Activated CD4-positive, alpha-beta memory T cell treated with anti-CD3 and anti-CD28 coated beads, Interleukin-2, amount 10 ng/mL, durations not matched to agents 7 days and 5 days (primary cell): ENCODE measurements at regions of chr4 and their contacts with region 1.

Region 1: DNA sequence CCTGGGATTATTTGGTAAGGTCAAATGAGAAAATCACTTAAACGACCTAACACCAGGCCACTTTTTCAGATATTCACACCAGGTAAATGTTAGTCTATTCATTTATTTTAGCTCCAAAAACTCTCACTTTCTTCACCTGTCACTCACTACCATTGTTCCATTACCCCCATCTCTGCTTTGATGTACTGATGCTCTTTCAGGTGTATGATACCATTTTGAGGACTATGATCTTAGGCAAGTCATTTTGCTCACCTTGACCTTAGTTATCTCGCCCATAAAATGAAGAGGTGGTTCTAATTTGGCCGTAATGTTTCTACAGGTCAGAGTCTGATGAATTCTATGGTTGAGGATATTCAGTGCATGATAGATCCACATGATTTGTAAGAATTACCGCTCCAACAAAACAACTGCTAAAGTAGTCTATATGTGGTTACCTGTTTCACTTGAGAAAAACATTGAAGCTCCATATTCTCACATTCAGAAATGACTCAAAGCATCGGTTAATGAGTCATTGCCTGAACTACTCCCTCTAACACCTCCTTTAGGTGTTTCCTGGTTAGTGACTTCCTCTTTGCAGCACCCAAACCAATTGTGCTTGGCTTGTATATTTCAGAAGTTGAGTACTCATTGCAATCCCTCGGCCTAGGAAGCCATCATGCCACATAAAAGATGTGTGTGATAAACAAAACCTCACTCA is 4.5 kb downstream of the DTHD1 start:
- DNase-seq: peak; percentile 76
- H3K4me3 Mint-ChIP-seq: peak overlapping the region; percentile 43
- H3K27ac Mint-ChIP-seq: peak overlapping the region; percentile 90
- H3K4me1 Mint-ChIP-seq: peaks cover 69% of the 10 kb centered on the region
- H3K27me3 Mint-ChIP-seq: no peaks in the 10 kb centered on the region

Region 2: GRCh38 chr4:36233567-36234266 is 52.2 kb before region 1 on chr4:
- CTCF ChIA-PET with region 1: no interaction called
- POLR2A ChIA-PET with region 1: no interaction called
- DNase-seq: no peak
- H3K4me3 Mint-ChIP-seq: no peak overlapping the region
- H3K27ac Mint-ChIP-seq: no peak overlapping the region
- H3K4me1 Mint-ChIP-seq: peaks cover 49% of the 10 kb centered on the region
- H3K27me3 Mint-ChIP-seq: no peaks in the 10 kb centered on the region

Region 3: GRCh38 chr4:36255577-36255976 is 30.4 kb before region 1 on chr4:
- CTCF ChIA-PET with region 1: interaction called, 4 read pairs
- POLR2A ChIA-PET with region 1: interaction called, 30 read pairs
- DNase-seq: peak; percentile 73
- H3K4me3 Mint-ChIP-seq: peak overlapping the region; percentile 68
- H3K27ac Mint-ChIP-seq: peak overlapping the region; percentile 96
- H3K4me1 Mint-ChIP-seq: peaks cover 46% of the 10 kb centered on the region
- H3K27me3 Mint-ChIP-seq: no peaks in the 10 kb centered on the region

Region 4: DNA sequence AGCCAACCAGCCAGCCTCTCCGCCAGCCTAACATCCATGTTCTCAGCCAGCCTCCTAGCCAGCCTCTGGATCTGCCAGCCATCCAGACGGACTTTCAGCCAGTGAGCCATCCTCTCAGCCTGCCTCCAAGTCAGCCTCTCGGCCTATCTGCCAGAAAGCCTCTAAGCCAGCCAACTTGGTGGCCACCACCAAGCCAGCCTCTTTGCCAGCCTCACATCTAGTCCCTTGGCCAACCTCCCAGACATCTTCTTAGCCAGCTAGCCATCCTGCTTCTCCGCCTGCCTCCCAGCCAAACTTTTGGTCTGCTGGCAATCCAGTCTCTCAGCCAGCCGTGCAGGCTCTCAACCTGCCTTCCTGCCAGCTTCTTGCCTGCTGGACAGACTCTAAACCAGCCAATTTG is 25.2 kb before region 1 on chr4:
- CTCF ChIA-PET with region 1: interaction called, 4 read pairs
- POLR2A ChIA-PET with region 1: interaction called, 30 read pairs
- DNase-seq: no peak
- H3K4me3 Mint-ChIP-seq: no peak overlapping the region
- H3K27ac Mint-ChIP-seq: no peak overlapping the region
- H3K4me1 Mint-ChIP-seq: peaks cover 25% of the 10 kb centered on the region
- H3K27me3 Mint-ChIP-seq: no peaks in the 10 kb centered on the region

Region 5: DNA sequence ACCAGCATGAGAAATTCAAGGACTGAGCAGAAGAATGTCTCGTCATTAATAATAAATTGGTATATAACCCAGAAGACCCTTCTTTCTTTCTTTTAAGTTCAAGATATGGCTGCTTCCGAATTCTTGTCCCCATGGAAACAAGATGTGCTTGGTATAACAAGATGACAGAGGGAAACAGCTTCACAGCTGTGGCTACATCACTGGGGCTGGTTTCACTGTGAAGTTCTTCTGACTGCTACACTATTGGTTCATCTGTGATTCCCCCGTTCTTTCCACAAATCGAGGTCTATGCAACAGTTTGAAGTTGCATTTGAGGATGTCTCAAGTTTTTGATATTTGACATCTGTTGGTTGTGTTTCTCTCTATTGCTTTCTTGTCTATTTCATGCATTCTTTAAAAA is 16.8 kb before region 1 on chr4:
- CTCF ChIA-PET with region 1: interaction called, 4 read pairs
- POLR2A ChIA-PET with region 1: interaction called, 18 read pairs
- DNase-seq: no peak
- H3K4me3 Mint-ChIP-seq: no peak overlapping the region
- H3K27ac Mint-ChIP-seq: no peak overlapping the region
- H3K4me1 Mint-ChIP-seq: peaks cover 46% of the 10 kb centered on the region
- H3K27me3 Mint-ChIP-seq: no peaks in the 10 kb centered on the region

Region 6: GRCh38 chr4:36320117-36320896 is 34.4 kb after region 1 on chr4:
- CTCF ChIA-PET with region 1: interaction called, 6 read pairs
- POLR2A ChIA-PET with region 1: interaction called, 11 read pairs
- DNase-seq: no peak
- H3K4me3 Mint-ChIP-seq: no peak overlapping the region
- H3K27ac Mint-ChIP-seq: no peak overlapping the region
- H3K4me1 Mint-ChIP-seq: peaks cover 70% of the 10 kb centered on the region
- H3K27me3 Mint-ChIP-seq: peaks cover 2% of the 10 kb centered on the region

Region 7: DNA sequence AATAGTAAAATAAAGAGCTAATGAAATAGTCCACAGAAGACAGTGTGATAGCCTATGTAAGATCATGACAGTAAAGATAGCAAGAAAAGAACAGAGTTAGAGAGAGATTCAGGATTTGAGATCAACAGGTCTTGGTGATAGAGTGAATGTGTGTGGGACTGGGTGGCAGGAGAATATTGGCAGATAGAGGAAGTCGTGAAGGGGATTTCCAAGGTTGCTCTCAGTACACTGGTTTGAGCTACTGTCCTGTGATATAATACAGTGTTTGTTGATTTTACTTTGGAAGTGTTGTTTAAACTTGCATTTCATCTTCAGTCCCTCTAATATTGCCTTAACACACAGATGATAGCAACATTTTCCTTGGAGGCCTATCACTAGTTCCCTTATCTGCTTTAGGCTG is 39.6 kb after region 1 on chr4:
- CTCF ChIA-PET with region 1: interaction called, 6 read pairs
- POLR2A ChIA-PET with region 1: interaction called, 11 read pairs
- DNase-seq: no peak
- H3K4me3 Mint-ChIP-seq: no peak overlapping the region
- H3K27ac Mint-ChIP-seq: peak overlapping the region; percentile 13
- H3K4me1 Mint-ChIP-seq: peaks cover 58% of the 10 kb centered on the region
- H3K27me3 Mint-ChIP-seq: peaks cover 2% of the 10 kb centered on the region

Region 8: GRCh38 chr4:36394352-36394903 is 108.5 kb after region 1 on chr4:
- CTCF ChIA-PET with region 1: interaction called, 6 read pairs
- POLR2A ChIA-PET with region 1: interaction called, 18 read pairs
- DNase-seq: peak; percentile 48
- H3K4me3 Mint-ChIP-seq: peak overlapping the region; percentile 51
- H3K27ac Mint-ChIP-seq: peak overlapping the region; percentile 89
- H3K4me1 Mint-ChIP-seq: peaks cover 16% of the 10 kb centered on the region
- H3K27me3 Mint-ChIP-seq: peaks cover 23% of the 10 kb centered on the region